ENCODE measurements at regions of chr10 and their contacts with region 1.

Region 1: DNA sequence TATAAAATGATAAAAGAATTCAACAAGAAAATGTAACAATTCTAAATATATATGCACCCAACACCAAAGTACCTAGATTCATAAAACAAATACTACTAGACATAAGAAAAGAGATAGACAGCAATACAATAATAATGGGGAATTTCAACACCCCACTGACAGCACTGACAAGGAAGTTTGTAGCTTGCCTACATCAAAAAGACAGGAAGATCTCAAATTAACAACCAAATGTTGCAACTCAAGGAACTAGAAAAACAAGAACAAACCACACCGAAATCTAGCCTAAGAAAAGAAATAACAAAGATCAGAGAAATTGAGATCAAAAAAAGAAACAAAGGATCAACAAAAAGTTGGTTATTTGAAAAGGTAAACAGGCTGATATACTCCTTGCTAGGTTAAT is 36.5 kb upstream of the TNKS2 start:
- DNase-seq: no peak
- ATAC-seq: no peak
- H3K4me3 ChIP-seq: no peak overlapping the region
- H3K27ac ChIP-seq: no peak overlapping the region
- H3K4me1 ChIP-seq: no peaks in the 10 kb centered on the region
- H3K27me3 ChIP-seq: no peaks in the 10 kb centered on the region
- CTCF ChIP-seq: no peak
- POLR2A ChIP-seq: no peak

Region 2: GRCh38 chr10:91493313-91493712 is 268.4 kb before region 1 on chr10:
- intact Hi-C with region 1: no loop called
- DNase-seq: no peak
- ATAC-seq: no peak
- H3K4me3 ChIP-seq: no peak overlapping the region
- H3K27ac ChIP-seq: no peak overlapping the region
- H3K4me1 ChIP-seq: no peaks in the 10 kb centered on the region
- H3K27me3 ChIP-seq: no peaks in the 10 kb centered on the region
- CTCF ChIP-seq: peak in 6 of 7 experiments; percentile 20 to 73 (median 62)
- POLR2A ChIP-seq: no peak

Region 3: DNA sequence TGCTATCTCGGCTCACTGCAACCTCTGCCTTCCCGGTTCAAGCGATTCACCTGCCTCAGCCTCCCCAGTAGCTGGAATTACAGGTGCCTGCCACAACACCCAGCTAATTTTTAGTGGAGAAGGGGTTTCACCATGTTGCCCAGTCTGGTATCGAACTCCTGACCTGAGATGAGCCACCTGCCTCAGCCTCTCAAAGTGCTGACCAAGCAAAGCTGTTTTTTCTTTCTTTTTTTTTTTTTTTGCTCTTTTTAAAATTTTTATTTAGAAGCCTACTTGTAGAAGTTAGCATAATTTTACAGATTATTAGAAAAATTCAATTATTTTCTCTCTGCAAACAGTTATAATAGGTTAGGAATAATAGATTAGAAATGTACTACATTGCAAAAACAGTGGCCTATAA is 148.7 kb after region 1 on chr10:
- intact Hi-C with region 1: loop called (anchors 5 kb)
- DNase-seq: no peak
- ATAC-seq: no peak
- H3K4me3 ChIP-seq: no peak overlapping the region
- H3K27ac ChIP-seq: no peak overlapping the region
- H3K4me1 ChIP-seq: peaks cover 17% of the 10 kb centered on the region
- H3K27me3 ChIP-seq: no peaks in the 10 kb centered on the region
- CTCF ChIP-seq: no peak
- POLR2A ChIP-seq: no peak

Measured in body of pancreas (tissue), 4 donors.